CD14-positive monocyte (primary cell): ENCODE measurements at regions of chr1 and their contacts with region 1.

Region 1: GRCh38 chr1:54806931-54807611 is 5.9 kb upstream of the TTC22 start:
- DNase-seq: peak; percentile 5 to 29 (median 17)
- H3K4me3 ChIP-seq: no peak overlapping the region
- H3K4me3 Mint-ChIP-seq: no peak overlapping the region
- H3K27ac ChIP-seq: peak overlapping the region in 1 of 2 donors; percentile 38
- H3K27ac Mint-ChIP-seq: peak overlapping the region in 1 of 7 donors; percentile 55
- H3K4me1 ChIP-seq: peaks cover 0 to 25% of the 10 kb centered on the region in 2 donors
- H3K4me1 Mint-ChIP-seq: peaks cover 18% of the 10 kb centered on the region
- H3K27me3 ChIP-seq: no peaks in the 10 kb centered on the region
- H3K27me3 Mint-ChIP-seq: peaks cover 3 to 7% (median 3%) of the 10 kb centered on the region in 3 donors
- CTCF ChIP-seq: no peak

Region 2: GRCh38 chr1:54671985-54672608 is 135.0 kb before region 1 on chr1:
- intact Hi-C with region 1: loop called (anchors 5 kb)
- DNase-seq: peak in 1 of 3 donors; percentile 12
- H3K4me3 ChIP-seq: no peak overlapping the region
- H3K4me3 Mint-ChIP-seq: no peak overlapping the region
- H3K27ac ChIP-seq: no peak overlapping the region
- H3K27ac Mint-ChIP-seq: no peak overlapping the region
- H3K4me1 ChIP-seq: no peaks in the 10 kb centered on the region
- H3K4me1 Mint-ChIP-seq: no peaks in the 10 kb centered on the region
- H3K27me3 ChIP-seq: no peaks in the 10 kb centered on the region
- H3K27me3 Mint-ChIP-seq: peaks cover 0 to 1% (median 0%) of the 10 kb centered on the region in 3 donors
- CTCF ChIP-seq: peak; percentile 78

Region 3: GRCh38 chr1:54721719-54722118 is 85.4 kb before region 1 on chr1:
- intact Hi-C with region 1: no loop called
- DNase-seq: no peak
- H3K4me3 ChIP-seq: no peak overlapping the region
- H3K4me3 Mint-ChIP-seq: no peak overlapping the region
- H3K27ac ChIP-seq: no peak overlapping the region
- H3K27ac Mint-ChIP-seq: no peak overlapping the region
- H3K4me1 ChIP-seq: peaks cover 2 to 3% of the 10 kb centered on the region in 2 donors
- H3K4me1 Mint-ChIP-seq: peaks cover 6% of the 10 kb centered on the region
- H3K27me3 ChIP-seq: no peaks in the 10 kb centered on the region
- H3K27me3 Mint-ChIP-seq: no peaks in the 10 kb centered on the region
- CTCF ChIP-seq: no peak

Region 4: GRCh38 chr1:54934869-54935268 is 127.8 kb after region 1 on chr1:
- intact Hi-C with region 1: no loop called
- DNase-seq: no peak
- H3K4me3 ChIP-seq: no peak overlapping the region
- H3K4me3 Mint-ChIP-seq: no peak overlapping the region
- H3K27ac ChIP-seq: no peak overlapping the region
- H3K27ac Mint-ChIP-seq: no peak overlapping the region
- H3K4me1 ChIP-seq: no peaks in the 10 kb centered on the region
- H3K4me1 Mint-ChIP-seq: no peaks in the 10 kb centered on the region
- H3K27me3 ChIP-seq: peaks cover 3 to 5% of the 10 kb centered on the region in 2 donors
- H3K27me3 Mint-ChIP-seq: peaks cover 14 to 23% (median 18%) of the 10 kb centered on the region in 3 donors
- CTCF ChIP-seq: no peak